ENCODE measurements at regions of chr3 and their contacts with region 1.

Region 1: DNA sequence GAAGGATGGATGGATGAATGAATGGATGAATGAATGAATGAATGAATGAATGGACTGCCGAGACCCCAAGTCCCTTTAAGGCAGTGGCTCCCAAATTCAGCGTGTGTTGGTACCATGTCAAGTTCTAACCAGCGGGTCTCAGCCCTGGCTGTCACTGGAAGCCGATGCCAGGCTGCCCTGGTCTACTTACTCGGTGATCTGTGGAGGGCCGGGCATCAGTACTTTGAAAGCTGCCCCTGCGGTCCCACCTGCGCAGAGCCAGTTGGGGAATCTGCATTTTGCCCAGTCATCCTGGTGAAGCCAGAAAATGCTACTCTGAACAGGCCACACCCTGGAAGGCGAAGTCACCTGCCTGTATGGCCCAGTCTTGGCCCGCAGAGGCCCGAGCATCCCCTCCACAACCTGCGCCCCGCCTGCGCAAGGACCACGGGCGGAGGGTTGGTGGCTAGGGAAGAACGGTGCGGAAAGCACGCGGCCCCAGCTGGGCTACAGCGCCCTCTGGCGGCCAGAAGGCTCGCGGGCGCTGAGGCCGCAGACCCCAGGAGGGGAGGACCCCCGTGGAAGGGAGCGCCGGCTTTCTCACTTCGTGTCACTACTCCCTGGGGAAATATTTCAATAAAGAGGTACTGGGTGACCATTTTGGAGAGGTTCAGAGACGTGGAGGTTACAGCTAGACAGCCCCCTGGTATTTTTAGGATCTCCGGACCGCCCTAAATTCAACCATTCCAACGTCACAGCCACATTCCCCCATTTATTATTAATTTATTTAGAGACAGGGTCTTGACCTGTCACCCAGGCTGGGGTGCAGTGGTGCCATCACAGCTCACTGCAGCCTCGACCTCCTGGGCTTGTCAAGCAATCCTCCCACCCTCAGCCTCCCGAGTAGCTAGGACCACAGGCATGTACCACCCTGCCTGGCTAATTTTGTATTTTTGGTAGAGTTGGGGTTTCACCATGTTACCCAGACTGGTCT is 34.9 kb downstream of the PRKCD start:
- DNase-seq: no peak
- ATAC-seq: peak; percentile 77
- H3K4me3 ChIP-seq: no peak overlapping the region; the same call in 1 of the 2 replicates
- H3K27ac ChIP-seq: peak overlapping the region; percentile 85
- H3K4me1 ChIP-seq: peaks cover 43% of the 10 kb centered on the region
- H3K27me3 ChIP-seq: no peaks in the 10 kb centered on the region
- CTCF ChIP-seq: peak; percentile 98 to 99 (median 99); a peak in 5 of 6 replicates
- EP300 ChIP-seq: no peak
- POLR2A ChIP-seq: no peak; the same call in 1 of the 2 replicates
- RAD21 ChIP-seq: peak; percentile 95

Region 2: DNA sequence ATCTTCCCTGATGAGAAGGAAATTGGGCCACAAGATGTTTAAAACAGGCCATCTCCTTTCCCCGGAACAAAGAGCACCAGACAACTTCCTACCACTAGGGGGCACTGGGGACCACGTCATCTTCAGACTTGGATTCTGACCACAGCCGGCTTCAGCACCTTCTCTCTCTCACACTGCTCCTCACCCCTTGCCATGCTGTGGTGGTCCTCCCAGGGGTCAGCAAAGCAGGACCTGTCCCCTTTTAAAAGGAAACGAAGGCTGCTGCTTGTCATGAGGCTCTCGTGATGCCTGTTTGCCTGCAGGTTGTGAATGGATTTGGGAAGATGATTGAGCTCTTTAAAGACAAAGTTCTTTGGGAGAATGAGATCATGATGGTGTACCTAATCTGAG is 81.9 kb before region 1 on chr3:
- CTCF ChIA-PET with region 1: interaction called, 303 read pairs
- POLR2A ChIA-PET with region 1: interaction called, 4 read pairs
- RAD21 ChIA-PET with region 1: interaction called, 89 read pairs
- SMC1A ChIA-PET with region 1: interaction called, 65 read pairs
- in situ Hi-C with region 1: no loop called
- intact Hi-C with region 1: loop called (anchors 1 kb)
- DNase-seq: no peak
- ATAC-seq: peak; percentile 99
- H3K4me3 ChIP-seq: no peak overlapping the region
- H3K27ac ChIP-seq: no peak overlapping the region
- H3K4me1 ChIP-seq: no peaks in the 10 kb centered on the region
- H3K27me3 ChIP-seq: no peaks in the 10 kb centered on the region
- CTCF ChIP-seq: peak; percentile 86 to 97 (median 94)
- EP300 ChIP-seq: no peak
- POLR2A ChIP-seq: no peak
- RAD21 ChIP-seq: peak; percentile 90

Region 3: DNA sequence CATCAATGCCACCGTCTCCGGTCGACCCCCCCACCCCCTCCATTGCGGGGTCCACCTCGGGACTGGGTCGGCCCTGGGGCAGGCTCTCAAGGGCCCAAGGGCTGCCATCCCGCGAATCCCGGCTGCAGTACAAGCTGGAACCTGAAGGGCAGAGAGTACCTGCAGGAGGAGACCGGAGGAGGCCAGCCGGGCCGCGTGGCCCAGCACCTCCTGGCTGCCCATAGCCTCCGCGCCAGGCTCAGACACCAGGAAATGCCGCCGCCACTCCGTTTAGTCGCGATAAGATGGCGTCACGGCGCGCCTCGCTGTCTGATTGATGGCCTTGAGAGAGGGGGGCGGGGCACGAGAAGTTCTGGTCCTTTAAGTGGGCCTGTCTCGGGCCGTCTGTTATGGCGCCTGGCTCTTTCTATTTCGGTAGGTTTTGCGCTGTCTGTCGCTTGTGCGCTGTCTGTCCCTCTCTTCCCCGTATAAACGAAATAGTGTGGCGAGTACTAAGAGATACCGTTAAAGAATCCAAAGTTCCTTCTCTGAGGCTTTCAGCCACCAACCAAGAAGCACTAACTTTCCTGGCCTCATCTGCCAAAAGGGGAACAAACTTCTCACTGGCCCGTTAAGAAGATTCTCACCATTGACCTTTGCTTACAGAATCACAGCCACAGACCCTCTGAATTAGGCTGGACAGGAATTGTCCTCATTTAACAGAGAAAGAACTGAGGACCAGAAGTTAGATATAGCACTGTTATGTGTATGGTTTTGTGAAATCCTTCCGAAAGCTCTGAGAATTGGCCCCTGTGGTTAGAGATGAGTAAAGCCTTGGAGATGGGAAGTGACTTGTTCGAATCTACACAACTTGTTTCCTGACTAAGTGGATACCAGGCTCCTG is 65.5 kb before region 1 on chr3 and contains the start of gene RFT1:
- CTCF ChIA-PET with region 1: interaction called, 476 read pairs
- POLR2A ChIA-PET with region 1: interaction called, 21 read pairs
- RAD21 ChIA-PET with region 1: interaction called, 151 read pairs
- SMC1A ChIA-PET with region 1: interaction called, 227 read pairs
- in situ Hi-C with region 1: loop called (anchors 5 kb)
- intact Hi-C with region 1: loop called (anchors 1 kb)
- DNase-seq: peak; percentile 73
- ATAC-seq: peak; percentile 89
- H3K4me3 ChIP-seq: peak within 1 kb of the TSS; percentile 92
- H3K27ac ChIP-seq: peak within 1 kb of the TSS; percentile 87
- H3K4me1 ChIP-seq: peaks cover 7% of the 10 kb centered on the region; the same call in 1 of the 2 replicates
- H3K27me3 ChIP-seq: no peaks in the 10 kb centered on the region
- CTCF ChIP-seq: no peak
- EP300 ChIP-seq: no peak
- POLR2A ChIP-seq: peak; percentile 98
- RAD21 ChIP-seq: no peak
- polyA plus RNA-seq, gene RFT1: 24.7 to 29.0 TPM

Region 4: GRCh38 chr3:53160660-53161449 is 35.0 kb before region 1 on chr3 and contains the start of gene PRKCD:
- CTCF ChIA-PET with region 1: interaction called, 125 read pairs
- POLR2A ChIA-PET with region 1: interaction called, 5 read pairs
- RAD21 ChIA-PET with region 1: interaction called, 14 read pairs
- SMC1A ChIA-PET with region 1: interaction called, 13 read pairs
- in situ Hi-C with region 1: no loop called
- intact Hi-C with region 1: loop called (anchors 2 kb)
- DNase-seq: no peak
- ATAC-seq: peak; percentile 74
- H3K4me3 ChIP-seq: peak within 1 kb of the TSS; percentile 97
- H3K27ac ChIP-seq: peak within 1 kb of the TSS; percentile 92
- H3K4me1 ChIP-seq: peaks cover 45% of the 10 kb centered on the region
- H3K27me3 ChIP-seq: no peaks in the 10 kb centered on the region; a peak in 1 of 4 replicates
- CTCF ChIP-seq: peak; percentile 30 to 65 (median 49)
- EP300 ChIP-seq: no peak
- POLR2A ChIP-seq: peak; percentile 78
- RAD21 ChIP-seq: peak; percentile 13; the same call in 1 of the 2 replicates
- polyA plus RNA-seq, gene PRKCD: 13.2 to 22.1 TPM

Region 5: GRCh38 chr3:53174346-53175250 is 21.3 kb before region 1 on chr3:
- CTCF ChIA-PET with region 1: interaction called, 125 read pairs
- POLR2A ChIA-PET with region 1: interaction called, 5 read pairs
- RAD21 ChIA-PET with region 1: interaction called, 44 read pairs
- SMC1A ChIA-PET with region 1: interaction called, 30 read pairs
- in situ Hi-C with region 1: no loop called
- intact Hi-C with region 1: no loop called
- DNase-seq: no peak
- ATAC-seq: peak; percentile 36
- H3K4me3 ChIP-seq: peak overlapping the region; percentile 52
- H3K27ac ChIP-seq: peak overlapping the region; percentile 64
- H3K4me1 ChIP-seq: peaks cover 83% of the 10 kb centered on the region
- H3K27me3 ChIP-seq: no peaks in the 10 kb centered on the region
- CTCF ChIP-seq: peak; percentile 20 to 45 (median 34); a peak in 5 of 6 replicates
- EP300 ChIP-seq: no peak
- POLR2A ChIP-seq: peak; percentile 22
- RAD21 ChIP-seq: peak; percentile 65

Region 6: GRCh38 chr3:53254509-53255422 is 58.9 kb after region 1 on chr3:
- CTCF ChIA-PET with region 1: interaction called, 12 read pairs
- POLR2A ChIA-PET with region 1: no interaction called
- RAD21 ChIA-PET with region 1: interaction called, 4 read pairs
- SMC1A ChIA-PET with region 1: interaction called, 3 read pairs
- in situ Hi-C with region 1: no loop called
- intact Hi-C with region 1: no loop called
- DNase-seq: peak; percentile 15
- ATAC-seq: peak; percentile 81
- H3K4me3 ChIP-seq: peak overlapping the region; percentile 92
- H3K27ac ChIP-seq: peak overlapping the region; percentile 79
- H3K4me1 ChIP-seq: peaks cover 28% of the 10 kb centered on the region
- H3K27me3 ChIP-seq: no peaks in the 10 kb centered on the region
- CTCF ChIP-seq: no peak
- EP300 ChIP-seq: no peak
- POLR2A ChIP-seq: no peak; the same call in 1 of the 2 replicates
- RAD21 ChIP-seq: no peak

Region 7: DNA sequence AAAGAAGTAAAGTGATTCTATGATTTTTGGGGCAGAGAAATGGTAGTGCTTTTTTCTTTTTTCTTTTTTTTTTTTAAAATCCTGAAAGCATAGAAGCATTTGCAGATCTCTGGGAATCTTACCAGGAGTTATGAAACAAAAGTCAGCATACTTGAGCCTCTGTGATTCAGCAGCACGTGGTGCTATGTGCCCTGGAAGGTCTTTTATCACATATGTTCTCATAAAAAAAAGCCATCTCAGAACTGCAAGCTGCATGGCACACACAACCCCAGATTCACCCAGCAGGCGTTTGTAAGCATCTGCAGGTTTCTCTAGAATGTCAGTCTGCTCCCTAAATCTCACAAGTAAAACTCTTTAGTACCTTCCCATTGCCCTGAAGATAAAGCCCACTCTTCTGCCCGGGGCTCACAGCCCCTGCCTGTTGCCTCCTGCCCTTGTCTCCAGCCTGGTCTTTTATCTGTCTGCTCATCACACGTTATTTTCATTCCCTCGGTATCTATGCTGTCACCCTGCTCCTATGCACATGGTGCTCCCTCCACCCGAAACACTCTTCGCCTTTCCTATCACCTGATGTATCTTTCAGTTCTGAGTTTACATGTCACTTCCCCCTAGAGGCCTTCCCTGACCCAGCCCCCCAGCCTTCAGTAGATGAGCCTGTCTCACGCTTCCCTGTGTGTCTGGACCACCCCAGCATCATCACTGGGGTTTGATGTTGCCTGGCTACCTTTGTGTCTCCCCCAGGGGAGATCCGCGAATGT is 577.9 kb after region 1 on chr3:
- CTCF ChIA-PET with region 1: no interaction called
- POLR2A ChIA-PET with region 1: no interaction called
- RAD21 ChIA-PET with region 1: no interaction called
- SMC1A ChIA-PET with region 1: no interaction called
- in situ Hi-C with region 1: no loop called
- intact Hi-C with region 1: no loop called
- DNase-seq: peak; percentile 82
- ATAC-seq: peak; percentile 93
- H3K4me3 ChIP-seq: no peak overlapping the region
- H3K27ac ChIP-seq: peak overlapping the region; percentile 65
- H3K4me1 ChIP-seq: peaks cover 27% of the 10 kb centered on the region
- H3K27me3 ChIP-seq: no peaks in the 10 kb centered on the region
- CTCF ChIP-seq: 0 out of 6 replicates have a peak, but pooled peaks of 1 of the 3 experiments have one; percentile 7
- EP300 ChIP-seq: peak; percentile 58 to 66; a peak in 3 of 4 replicates
- POLR2A ChIP-seq: peak; percentile 46; the same call in 1 of the 2 replicates
- RAD21 ChIP-seq: no peak